Dorsolateral prefrontal cortex (tissue), 120 donors: ENCODE measurements at regions of chrX and their contacts with region 1.

Region 1: GRCh38 chrX:41923257-41923969 is at the start of gene CASK:
- DNase-seq: peak; percentile 75 to 93 (median 88)
- H3K4me3 ChIP-seq: peak within 1 kb of the TSS; percentile 43 to 79 (median 65)
- H3K27ac ChIP-seq: peak within 1 kb of the TSS in 55 of 59 donors; percentile 15 to 90 (median 78)
- H3K27me3 ChIP-seq: peaks cover 0 to 65% (median 19%) of the 10 kb centered on the region in 45 donors
- CTCF ChIP-seq: peak in 14 of 56 donors; percentile 12 to 37 (median 24)
- total RNA-seq, gene CASK: 35.0 to 72.8 (median 52.6) TPM

Region 2: GRCh38 chrX:41178201-41178600 is 745.2 kb before region 1 on chrX:
- intact Hi-C with region 1: no loop called
- DNase-seq: no peak
- H3K4me3 ChIP-seq: no peak overlapping the region
- H3K27ac ChIP-seq: no peak overlapping the region
- H3K27me3 ChIP-seq: no peaks in the 10 kb centered on the region
- CTCF ChIP-seq: no peak

Region 3: DNA sequence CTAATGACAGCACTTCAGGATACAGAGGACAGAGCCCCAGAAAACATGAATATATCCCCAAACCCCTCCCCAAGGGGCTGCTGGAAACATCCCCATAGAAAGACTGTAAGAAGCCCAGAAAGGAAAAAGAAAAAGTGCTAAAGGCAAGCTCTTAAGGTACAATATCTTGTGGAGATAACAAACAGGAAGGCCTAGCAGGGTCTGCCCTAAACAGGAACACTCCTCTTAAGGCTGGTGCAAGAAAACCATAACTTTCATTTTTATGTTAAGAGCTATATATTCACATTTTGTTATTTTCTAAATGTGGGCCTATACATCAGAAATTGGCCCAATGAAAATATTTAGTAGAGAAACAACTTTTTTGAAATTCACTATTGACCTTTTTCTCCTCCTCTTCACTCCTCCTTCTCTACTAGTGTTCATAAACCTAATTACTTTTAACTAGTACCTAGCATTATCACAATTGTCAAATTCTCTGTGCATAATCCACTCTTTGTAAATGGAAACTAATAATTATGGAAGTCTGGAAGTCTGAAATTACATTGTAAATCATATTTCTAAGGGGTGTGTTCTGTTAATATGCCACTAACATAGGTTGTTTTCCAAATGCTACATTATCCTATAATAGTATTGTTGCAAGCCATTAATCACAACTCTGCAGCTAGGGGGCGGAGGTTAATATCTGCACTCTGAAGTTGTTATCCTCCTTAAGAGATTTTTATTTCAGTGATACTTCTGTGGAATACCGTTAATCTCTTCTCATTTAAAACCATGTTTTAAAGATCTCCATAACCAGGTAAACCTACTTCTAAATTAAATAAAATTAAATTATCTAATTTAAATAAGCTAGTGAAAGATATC is 59.8 kb before region 1 on chrX:
- intact Hi-C with region 1: loop called in 1 of 2 experiments (anchors 10 kb)
- DNase-seq: no peak
- H3K4me3 ChIP-seq: no peak overlapping the region
- H3K27ac ChIP-seq: no peak overlapping the region
- H3K27me3 ChIP-seq: peaks cover 0 to 34% (median 0%) of the 10 kb centered on the region in 45 donors
- CTCF ChIP-seq: peak in 6 of 56 donors; percentile 7 to 20 (median 14)